A673 (cell line): ENCODE measurements at regions of chr2 and their contacts with region 1.

Region 1: DNA sequence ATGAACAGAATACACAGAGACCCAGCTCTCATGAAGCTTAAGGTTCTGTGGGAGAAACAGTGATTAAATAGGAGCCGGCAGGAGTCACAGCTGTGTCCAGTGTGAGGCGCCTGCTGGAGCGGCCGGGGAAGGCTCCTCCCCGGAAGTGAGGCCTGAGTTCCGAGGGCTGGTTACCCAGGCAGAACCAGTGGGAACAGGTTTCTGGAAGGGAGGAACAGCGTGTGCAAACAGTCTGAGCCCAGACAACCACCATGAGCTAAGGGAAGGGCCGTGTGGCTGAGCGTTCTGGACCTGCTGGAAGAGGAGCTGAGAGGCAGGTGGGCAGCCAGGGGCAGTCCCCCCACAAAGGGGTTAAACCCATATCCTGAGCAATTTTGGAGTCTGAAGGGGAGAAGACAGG is 26.0 kb upstream of the NPAS2 start:
- DNase-seq: no peak
- H3K4me3 ChIP-seq: no peak overlapping the region
- H3K27ac ChIP-seq: no peak overlapping the region
- H3K4me1 ChIP-seq: no peaks in the 10 kb centered on the region
- H3K27me3 ChIP-seq: no peaks in the 10 kb centered on the region
- CTCF ChIP-seq: no peak

Region 2: GRCh38 chr2:100757621-100758394 is 36.2 kb before region 1 on chr2:
- CTCF ChIA-PET with region 1: no interaction called
- POLR2A ChIA-PET with region 1: interaction called, 22 read pairs
- intact Hi-C with region 1: no loop called
- DNase-seq: peak; percentile 33
- H3K4me3 ChIP-seq: no peak overlapping the region
- H3K27ac ChIP-seq: no peak overlapping the region
- H3K4me1 ChIP-seq: no peaks in the 10 kb centered on the region
- H3K27me3 ChIP-seq: no peaks in the 10 kb centered on the region
- CTCF ChIP-seq: no peak